ENCODE measurements at regions of chr13 and their contacts with region 1.

Region 1: DNA sequence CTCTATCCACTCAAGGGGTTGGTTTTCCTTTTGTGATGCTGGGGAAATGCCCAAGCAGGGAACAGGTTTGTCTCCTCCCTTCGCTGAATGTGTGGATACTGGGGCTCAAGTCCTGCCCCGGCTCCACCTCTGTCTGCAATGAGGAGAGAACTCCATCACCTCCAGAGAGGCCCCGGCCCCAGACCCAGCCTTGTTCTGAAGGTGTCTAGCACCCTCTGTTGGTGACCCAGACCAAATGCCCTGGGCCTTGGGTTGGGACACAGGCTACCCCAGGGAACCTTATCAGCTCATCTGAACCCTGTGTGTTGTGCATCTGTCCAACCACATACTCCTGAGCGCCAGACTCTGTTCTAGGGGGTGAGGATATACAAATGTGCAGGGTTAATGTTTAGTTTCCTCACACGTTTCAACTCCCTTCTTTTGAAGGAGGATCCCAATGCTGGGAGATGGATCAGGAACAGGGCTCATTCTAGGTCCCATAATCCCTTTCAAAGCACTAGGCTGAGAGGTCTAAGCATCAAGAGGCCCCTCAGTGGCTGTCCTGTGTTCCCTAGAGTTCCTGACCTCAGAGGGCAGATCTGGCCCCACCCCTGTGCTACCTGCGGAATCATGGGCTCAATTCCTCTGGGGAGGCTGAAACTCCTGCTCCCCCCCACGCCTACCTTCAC is 112.5 kb upstream of the SLC7A1 start:
- DNase-seq: peak in 7 of 9 donors; percentile 8 to 49 (median 31)
- ATAC-seq: peak; percentile 61
- H3K4me3 ChIP-seq: no peak overlapping the region
- H3K4me3 Mint-ChIP-seq: no peak overlapping the region
- H3K27ac ChIP-seq: no peak overlapping the region
- H3K27ac Mint-ChIP-seq: no peak overlapping the region
- H3K4me1 ChIP-seq: no peaks in the 10 kb centered on the region
- H3K4me1 Mint-ChIP-seq: peaks cover 0 to 3% (median 0%) of the 10 kb centered on the region in 7 donors
- H3K27me3 ChIP-seq: no peaks in the 10 kb centered on the region
- H3K27me3 Mint-ChIP-seq: peaks cover 10 to 26% (median 12%) of the 10 kb centered on the region in 5 donors

Region 2: DNA sequence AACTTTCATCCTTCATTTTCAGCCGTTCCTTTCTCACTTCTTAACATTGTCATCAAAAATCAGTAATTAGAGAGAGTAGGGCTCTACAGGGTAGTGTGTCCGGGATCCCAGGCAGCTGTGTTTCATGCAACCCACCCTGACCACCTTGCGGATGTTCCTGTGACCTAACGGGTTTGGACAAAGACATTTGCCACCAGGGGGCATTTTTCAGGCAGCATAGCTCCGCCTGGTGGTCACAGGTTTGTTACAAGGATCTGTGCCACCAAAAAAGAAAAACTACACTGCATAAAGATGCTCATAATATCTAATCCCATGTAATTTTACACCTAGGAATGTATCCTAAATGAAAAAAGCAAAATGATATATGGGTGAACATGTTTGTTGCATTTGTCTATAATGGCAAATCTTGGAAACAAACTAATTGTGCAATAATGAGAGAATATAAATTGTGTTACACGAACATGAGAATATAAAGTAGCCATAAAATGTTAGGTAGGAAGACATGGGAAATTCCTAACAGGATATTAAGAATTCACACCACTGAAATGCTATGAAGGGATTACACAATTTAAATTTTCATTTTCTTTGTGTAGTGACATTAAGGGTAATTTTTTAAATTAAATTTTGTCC is 235.6 kb before region 1 on chr13:
- CTCF ChIA-PET with region 1: no interaction called
- POLR2A ChIA-PET with region 1: no interaction called
- intact Hi-C with region 1: loop called (anchors 1 to 2 kb)
- DNase-seq: peak in 5 of 9 donors; percentile 10 to 46 (median 17)
- ATAC-seq: peak; percentile 69
- H3K4me3 ChIP-seq: no peak overlapping the region
- H3K4me3 Mint-ChIP-seq: no peak overlapping the region
- H3K27ac ChIP-seq: no peak overlapping the region
- H3K27ac Mint-ChIP-seq: no peak overlapping the region
- H3K4me1 ChIP-seq: no peaks in the 10 kb centered on the region
- H3K4me1 Mint-ChIP-seq: peaks cover 0 to 2% (median 0%) of the 10 kb centered on the region in 7 donors
- H3K27me3 ChIP-seq: no peaks in the 10 kb centered on the region
- H3K27me3 Mint-ChIP-seq: peaks cover 3 to 12% (median 5%) of the 10 kb centered on the region in 5 donors

Region 3: DNA sequence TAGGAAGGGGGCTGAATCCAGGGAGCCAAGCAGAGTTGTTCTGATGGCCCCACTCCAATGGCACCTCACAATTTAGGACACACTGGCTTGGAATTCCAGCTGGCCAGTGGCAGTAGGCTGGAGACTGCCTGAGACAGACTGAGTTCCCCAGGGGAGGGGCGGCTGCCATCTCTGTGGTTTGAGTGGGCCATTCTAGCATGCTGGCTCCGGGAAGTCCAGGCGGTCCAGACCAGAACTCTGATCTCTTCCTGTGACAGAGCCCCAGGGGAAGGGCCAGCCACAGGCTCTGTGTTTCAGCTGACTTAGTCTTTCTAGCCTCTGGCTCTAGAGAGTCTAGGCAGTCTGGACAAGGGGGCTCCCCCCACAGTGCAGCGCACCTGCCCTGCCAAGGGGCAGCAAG is 83.0 kb before region 1 on chr13:
- CTCF ChIA-PET with region 1: no interaction called
- POLR2A ChIA-PET with region 1: no interaction called
- intact Hi-C with region 1: no loop called
- DNase-seq: no peak
- ATAC-seq: no peak
- H3K4me3 ChIP-seq: no peak overlapping the region
- H3K4me3 Mint-ChIP-seq: no peak overlapping the region
- H3K27ac ChIP-seq: no peak overlapping the region
- H3K27ac Mint-ChIP-seq: no peak overlapping the region
- H3K4me1 ChIP-seq: no peaks in the 10 kb centered on the region
- H3K4me1 Mint-ChIP-seq: peaks cover 0 to 12% (median 10%) of the 10 kb centered on the region in 7 donors
- H3K27me3 ChIP-seq: no peaks in the 10 kb centered on the region
- H3K27me3 Mint-ChIP-seq: peaks cover 0 to 39% (median 23%) of the 10 kb centered on the region in 5 donors